Ovary (tissue), 10 donors: ENCODE measurements at regions of chr11 and their contacts with region 1.

Region 1: DNA sequence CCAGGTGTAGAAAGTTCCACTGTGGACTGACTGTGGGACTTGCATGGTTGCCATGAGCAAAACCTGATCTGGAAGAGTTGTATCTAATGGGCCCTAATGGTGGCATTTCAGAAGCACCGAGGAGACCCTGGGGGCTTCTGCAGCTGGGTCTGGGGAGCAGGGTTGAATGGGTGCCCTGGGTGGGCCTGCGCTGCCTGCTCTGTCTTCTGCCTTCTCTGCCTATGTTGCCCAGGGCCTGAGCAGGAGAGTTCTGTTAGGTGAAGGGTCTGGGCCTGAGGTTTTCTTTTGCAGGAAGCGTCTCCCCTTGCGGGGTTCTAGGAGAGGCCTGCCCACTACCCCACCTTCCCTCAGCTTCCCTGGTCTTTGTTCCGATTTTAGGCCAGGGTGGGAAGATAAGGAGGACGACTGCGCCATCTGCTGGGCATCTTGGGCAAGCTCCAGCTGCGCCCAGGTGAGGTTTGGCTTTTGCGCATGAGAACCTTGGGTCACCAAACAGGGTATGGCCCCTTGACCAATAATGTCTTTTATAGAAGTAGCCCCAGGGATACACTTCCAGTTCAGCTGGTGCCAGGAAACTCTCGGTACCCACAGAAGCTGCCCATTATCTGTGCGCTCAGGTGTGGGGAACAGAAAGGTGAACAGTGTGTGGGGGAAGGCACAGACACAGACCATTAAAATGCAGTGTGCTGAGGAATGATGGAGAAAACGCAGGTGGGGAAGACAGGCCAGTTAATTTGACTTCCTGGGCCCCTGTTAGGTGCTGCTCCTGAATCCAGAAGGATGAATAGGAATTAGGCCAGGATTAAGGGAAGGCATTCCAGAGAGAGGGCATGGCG is 23.2 kb downstream of the COMMD9 start:
- DNase-seq: peak; percentile 34 to 74 (median 64)
- H3K4me3 ChIP-seq: no peak overlapping the region
- H3K27ac ChIP-seq: no peak overlapping the region
- H3K4me1 ChIP-seq: no peaks in the 10 kb centered on the region
- H3K27me3 ChIP-seq: no peaks in the 10 kb centered on the region
- CTCF ChIP-seq: peak in 2 of 3 donors; percentile 74 to 75
- EP300 ChIP-seq: no peak
- POLR2A ChIP-seq: no peak

Region 2: GRCh38 chr11:36131721-36132397 is 134.2 kb before region 1 on chr11:
- intact Hi-C with region 1: loop called in 1 of 4 experiments (anchors 5 kb)
- DNase-seq: peak; percentile 63 to 76 (median 71)
- H3K4me3 ChIP-seq: no peak overlapping the region
- H3K27ac ChIP-seq: no peak overlapping the region
- H3K4me1 ChIP-seq: no peaks in the 10 kb centered on the region
- H3K27me3 ChIP-seq: no peaks in the 10 kb centered on the region
- CTCF ChIP-seq: peak; percentile 44 to 75 (median 54)
- EP300 ChIP-seq: no peak
- POLR2A ChIP-seq: no peak